Prostate gland (tissue), 2 donors: ENCODE measurements at regions of chr3 and their contacts with region 1.

Region 1: GRCh38 chr3:64548200-64548889 is 139.5 kb downstream of the ADAMTS9 start:
- DNase-seq: peak; percentile 86
- H3K4me3 ChIP-seq: no peak overlapping the region
- H3K27ac ChIP-seq: peak overlapping the region; percentile 31
- H3K4me1 ChIP-seq: peaks cover 15% of the 10 kb centered on the region
- H3K27me3 ChIP-seq: no peaks in the 10 kb centered on the region
- CTCF ChIP-seq: no peak
- POLR2A ChIP-seq: no peak

Region 2: GRCh38 chr3:64505419-64505818 is 42.9 kb before region 1 on chr3:
- intact Hi-C with region 1: no loop called
- DNase-seq: no peak
- H3K4me3 ChIP-seq: no peak overlapping the region
- H3K27ac ChIP-seq: no peak overlapping the region
- H3K4me1 ChIP-seq: peaks cover 4% of the 10 kb centered on the region
- H3K27me3 ChIP-seq: no peaks in the 10 kb centered on the region
- CTCF ChIP-seq: no peak
- POLR2A ChIP-seq: no peak

Region 3: DNA sequence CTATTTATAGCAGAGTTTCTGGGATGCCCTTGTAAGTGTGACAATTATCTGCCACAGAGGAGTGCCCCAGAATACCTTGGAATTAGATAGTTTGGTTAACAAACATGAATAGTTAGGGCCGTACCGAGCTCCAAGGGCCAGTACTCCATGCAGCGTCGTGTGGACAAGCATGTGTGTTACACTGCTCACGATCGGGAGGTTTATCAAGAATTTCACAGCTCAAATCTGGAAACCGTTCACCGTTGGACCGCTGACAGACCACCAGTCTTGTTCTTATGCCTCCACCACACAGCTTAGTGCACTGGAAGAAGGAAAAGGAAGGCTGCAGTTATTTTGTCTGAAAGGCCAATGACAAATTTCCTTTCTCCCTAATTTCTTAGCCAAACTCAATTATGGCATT is 45.8 kb after region 1 on chr3:
- intact Hi-C with region 1: no loop called
- DNase-seq: no peak
- H3K4me3 ChIP-seq: no peak overlapping the region
- H3K27ac ChIP-seq: no peak overlapping the region
- H3K4me1 ChIP-seq: no peaks in the 10 kb centered on the region
- H3K27me3 ChIP-seq: no peaks in the 10 kb centered on the region
- CTCF ChIP-seq: no peak
- POLR2A ChIP-seq: no peak

Region 4: DNA sequence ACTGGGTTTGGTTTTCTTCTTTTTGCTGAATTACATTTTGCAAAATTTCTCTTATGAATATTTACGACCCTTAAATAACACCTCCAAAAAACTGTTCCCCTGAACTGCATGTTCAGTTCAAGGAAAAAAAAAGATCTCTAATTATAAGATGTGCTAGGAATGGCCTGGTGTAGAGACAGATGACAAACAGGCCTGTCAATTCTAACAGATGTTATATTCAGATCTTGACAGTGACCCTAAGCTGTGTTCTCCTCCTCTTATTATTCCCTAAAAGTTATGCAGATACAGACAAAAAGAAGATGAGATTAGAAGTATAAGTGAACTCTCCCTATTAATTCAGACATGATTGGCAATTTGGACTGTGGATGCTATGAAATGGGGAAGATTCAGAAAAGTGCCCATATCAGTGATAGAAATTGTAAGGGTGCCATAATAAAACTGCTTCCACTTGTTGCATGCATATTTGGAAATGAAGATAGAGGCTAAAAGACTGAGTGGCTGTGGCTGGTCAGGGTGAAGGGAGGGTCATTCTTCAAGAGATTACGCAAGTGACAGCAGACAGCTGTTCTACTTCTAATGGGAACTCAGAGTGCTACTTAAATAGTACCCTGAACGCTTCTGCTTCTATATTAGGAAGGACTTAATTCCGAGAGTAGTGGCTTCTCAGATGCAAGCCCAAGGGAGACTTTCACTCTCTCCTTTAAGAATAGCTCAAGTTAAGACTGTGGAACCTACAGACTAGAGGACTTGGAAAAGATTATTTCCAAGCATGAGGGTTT is 63.9 kb after region 1 on chr3:
- intact Hi-C with region 1: loop called (anchors 5 kb)
- DNase-seq: no peak
- H3K4me3 ChIP-seq: no peak overlapping the region
- H3K27ac ChIP-seq: peak overlapping the region; percentile 32 to 67
- H3K4me1 ChIP-seq: no peaks in the 10 kb centered on the region
- H3K27me3 ChIP-seq: no peaks in the 10 kb centered on the region
- CTCF ChIP-seq: no peak
- POLR2A ChIP-seq: no peak

Region 5: GRCh38 chr3:64666171-64666588 is 117.8 kb after region 1 on chr3:
- intact Hi-C with region 1: loop called (anchors 5 kb)
- DNase-seq: no peak
- H3K4me3 ChIP-seq: no peak overlapping the region
- H3K27ac ChIP-seq: peak overlapping the region in 1 of 2 donors; percentile 23
- H3K4me1 ChIP-seq: no peaks in the 10 kb centered on the region
- H3K27me3 ChIP-seq: no peaks in the 10 kb centered on the region
- CTCF ChIP-seq: no peak
- POLR2A ChIP-seq: no peak

Region 6: DNA sequence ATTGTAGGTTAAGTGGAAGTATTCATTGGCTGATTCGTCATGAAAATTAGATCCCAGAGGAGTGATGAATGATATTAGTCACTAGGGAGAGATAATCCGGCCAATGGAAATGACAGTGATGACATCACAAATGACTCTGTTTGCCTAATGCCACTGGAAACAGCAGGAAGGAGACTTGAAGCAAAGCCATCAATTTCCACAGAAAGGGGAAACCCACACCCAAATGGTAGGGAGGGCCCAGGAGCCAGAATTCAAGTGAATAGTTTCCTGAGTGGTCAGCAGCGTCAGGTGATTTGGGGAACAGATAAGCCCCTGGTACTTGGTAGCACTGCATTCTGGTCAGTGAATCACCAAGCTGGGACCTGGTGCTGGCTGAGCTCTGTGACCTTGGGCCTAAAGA is 142.7 kb after region 1 on chr3:
- intact Hi-C with region 1: no loop called
- DNase-seq: no peak
- H3K4me3 ChIP-seq: no peak overlapping the region
- H3K27ac ChIP-seq: no peak overlapping the region
- H3K4me1 ChIP-seq: no peaks in the 10 kb centered on the region
- H3K27me3 ChIP-seq: no peaks in the 10 kb centered on the region
- CTCF ChIP-seq: no peak
- POLR2A ChIP-seq: no peak